ENCODE measurements at regions of chr10 and their contacts with region 1.

Region 1: DNA sequence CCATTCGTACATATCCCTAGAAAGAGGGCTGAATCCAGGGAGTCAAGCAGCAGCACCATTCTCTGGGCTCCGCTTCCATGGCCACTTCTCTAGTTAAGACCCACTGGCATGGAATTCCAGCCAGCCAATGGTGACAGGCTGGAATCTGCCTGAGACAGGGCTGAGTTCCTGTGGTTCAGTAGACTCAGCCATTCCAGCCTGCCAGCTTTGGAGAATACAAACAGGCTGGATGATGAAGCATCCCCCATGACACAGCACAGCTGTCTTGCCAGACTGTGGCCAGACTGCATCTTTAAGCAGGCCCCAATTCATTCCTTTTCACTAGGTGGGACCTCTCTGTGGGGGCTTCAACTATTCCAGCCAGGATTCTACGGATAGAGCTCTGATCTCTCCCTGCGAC is 329.6 kb downstream of the XPNPEP1 start:
- DNase-seq: no peak
- ATAC-seq: no peak
- H3K4me3 ChIP-seq: no peak overlapping the region
- H3K4me3 Mint-ChIP-seq: no peak overlapping the region
- H3K27ac ChIP-seq: no peak overlapping the region
- H3K27ac Mint-ChIP-seq: no peak overlapping the region
- H3K4me1 ChIP-seq: no peaks in the 10 kb centered on the region
- H3K4me1 Mint-ChIP-seq: no peaks in the 10 kb centered on the region
- H3K27me3 ChIP-seq: no peaks in the 10 kb centered on the region
- H3K27me3 Mint-ChIP-seq: peaks cover 0 to 3% of the 10 kb centered on the region in 2 donors

Region 2: GRCh38 chr10:109247814-109248213 is 345.9 kb before region 1 on chr10:
- CTCF ChIA-PET with region 1: no interaction called
- POLR2A ChIA-PET with region 1: interaction called in 1 of 2 experiments, 18 read pairs
- DNase-seq: no peak
- ATAC-seq: no peak
- H3K4me3 ChIP-seq: no peak overlapping the region
- H3K4me3 Mint-ChIP-seq: no peak overlapping the region
- H3K27ac ChIP-seq: no peak overlapping the region
- H3K27ac Mint-ChIP-seq: no peak overlapping the region
- H3K4me1 ChIP-seq: no peaks in the 10 kb centered on the region
- H3K4me1 Mint-ChIP-seq: no peaks in the 10 kb centered on the region
- H3K27me3 ChIP-seq: no peaks in the 10 kb centered on the region
- H3K27me3 Mint-ChIP-seq: no peaks in the 10 kb centered on the region

Region 3: DNA sequence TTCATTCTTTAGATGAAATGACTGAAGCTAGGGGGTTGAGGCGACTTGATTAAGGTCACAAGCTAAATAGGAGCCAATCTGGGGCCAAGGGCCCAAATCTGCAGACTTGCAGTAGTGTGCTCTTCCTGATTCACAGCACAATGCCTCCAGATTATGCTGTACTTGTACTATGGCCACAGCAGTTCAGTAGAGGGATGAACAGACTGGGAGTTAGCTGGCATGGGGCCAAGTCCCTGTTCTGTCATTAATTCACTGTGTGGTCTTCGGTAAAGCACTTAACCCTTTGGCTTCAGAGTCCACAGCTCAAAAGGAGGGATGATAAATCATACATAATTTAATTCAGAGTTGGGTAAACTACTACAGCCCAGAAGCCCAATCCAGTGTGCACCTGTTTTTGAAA is 132.8 kb after region 1 on chr10:
- CTCF ChIA-PET with region 1: no interaction called
- POLR2A ChIA-PET with region 1: no interaction called
- DNase-seq: no peak
- ATAC-seq: no peak
- H3K4me3 ChIP-seq: no peak overlapping the region
- H3K4me3 Mint-ChIP-seq: no peak overlapping the region
- H3K27ac ChIP-seq: no peak overlapping the region
- H3K27ac Mint-ChIP-seq: no peak overlapping the region
- H3K4me1 ChIP-seq: no peaks in the 10 kb centered on the region
- H3K4me1 Mint-ChIP-seq: no peaks in the 10 kb centered on the region
- H3K27me3 ChIP-seq: peaks cover 0 to 2% of the 10 kb centered on the region in 2 experiments
- H3K27me3 Mint-ChIP-seq: peaks cover 4 to 7% of the 10 kb centered on the region in 2 donors

Measured in T-cell (primary cell).